ENCODE measurements at regions of chr16 and their contacts with region 1.

Region 1: DNA sequence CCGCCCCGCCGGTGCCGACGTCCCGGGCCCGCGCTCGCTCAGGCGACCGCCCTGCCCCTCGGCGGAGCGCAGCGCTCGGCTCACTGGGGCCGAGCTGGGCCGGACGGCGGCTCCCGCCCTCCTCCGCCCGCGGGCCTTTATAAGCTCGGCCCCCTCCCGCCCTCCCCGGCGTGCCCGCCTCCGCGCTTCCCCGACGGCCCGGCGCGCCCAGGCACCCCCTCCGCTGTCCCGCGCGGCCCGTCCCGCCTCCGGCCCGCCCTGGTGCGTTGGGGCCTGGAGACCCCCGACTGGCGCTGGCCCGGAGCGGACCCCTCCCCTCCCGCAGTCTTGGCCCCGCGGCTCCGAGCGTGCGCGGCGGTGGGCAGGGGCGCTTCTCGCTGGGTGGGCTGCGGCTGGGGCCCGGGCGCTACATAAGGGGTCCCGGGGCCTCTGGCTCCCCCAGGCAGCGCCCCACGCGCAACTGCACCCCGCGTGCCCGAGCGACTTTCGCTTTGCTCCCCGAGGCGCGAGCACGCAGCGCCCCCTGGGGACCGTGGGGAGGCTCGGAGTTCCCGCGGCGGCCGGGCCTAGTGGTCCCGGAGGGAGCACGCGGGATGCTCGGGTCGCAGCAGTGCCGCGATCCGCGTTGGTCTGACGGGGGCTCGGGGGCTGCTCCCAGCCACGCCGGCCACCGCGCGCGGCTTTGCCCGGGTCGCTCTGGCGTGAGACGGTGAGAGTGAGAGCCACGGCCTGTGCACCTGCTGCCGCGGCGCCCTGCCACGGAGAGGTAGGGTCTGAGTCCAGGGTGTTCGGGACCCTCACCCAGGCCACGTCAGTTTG is at the start of gene PIEZO1:
- DNase-seq: peak; percentile 91
- total RNA-seq, gene PIEZO1: 20.4 TPM

Region 2: GRCh38 chr16:88306860-88307545 is 478.3 kb before region 1 on chr16:
- intact Hi-C with region 1: no loop called
- DNase-seq: no peak

Region 3: GRCh38 chr16:88706288-88706964 is 78.9 kb before region 1 on chr16 and contains the starts of genes CTU2 and RNF166:
- intact Hi-C with region 1: no loop called
- DNase-seq: peak; percentile 96
- total RNA-seq, gene CTU2: 14.9 TPM
- total RNA-seq, gene RNF166: 17.1 TPM

Region 4: DNA sequence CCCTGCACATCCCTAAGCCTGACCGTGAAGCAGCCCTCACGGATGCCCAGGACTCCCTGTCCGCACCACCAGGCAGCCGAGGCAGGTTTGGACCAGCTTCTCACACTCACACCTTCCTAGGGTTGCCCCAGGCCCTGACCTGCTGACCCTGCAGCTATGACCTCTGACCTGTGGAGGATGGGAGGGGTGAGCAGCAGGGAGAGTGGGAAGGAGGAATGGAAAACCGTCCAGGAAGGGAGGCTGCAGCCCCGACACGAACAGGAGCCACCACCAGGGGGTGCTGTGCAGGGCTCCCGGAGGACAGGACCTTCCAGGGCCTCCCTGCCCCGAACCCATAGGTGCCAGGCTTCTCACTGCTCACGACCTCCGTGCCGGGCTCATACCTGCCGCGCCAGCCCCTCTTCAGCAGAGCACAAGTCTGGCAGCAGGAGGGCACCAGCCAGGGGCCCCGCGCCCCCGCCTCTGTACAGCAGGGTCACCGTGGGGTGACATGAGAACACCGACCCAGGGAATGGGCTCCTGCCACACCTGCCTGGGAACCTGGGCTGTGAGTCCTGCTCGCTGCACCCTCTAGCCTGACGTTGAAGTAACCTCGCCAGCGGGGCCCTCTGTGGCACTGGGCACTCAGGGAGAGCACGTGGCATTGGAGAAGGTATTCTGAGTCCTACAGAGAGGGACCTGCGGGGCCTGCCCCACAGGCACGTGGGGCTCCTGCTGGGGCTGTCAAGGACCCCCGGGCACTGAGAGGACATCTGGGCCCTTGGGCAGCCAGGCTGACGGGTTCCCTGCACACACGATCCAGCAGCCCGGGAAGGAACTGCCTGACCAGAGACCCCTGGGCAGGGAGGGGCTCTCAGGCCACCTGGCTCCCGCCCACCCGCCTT is 41.4 kb before region 1 on chr16:
- intact Hi-C with region 1: loop called (anchors 1 kb)
- DNase-seq: peak; percentile 88